Activated CD8-positive, alpha-beta T cell treated with anti-CD3 and anti-CD28 coated beads, Interleukin-2, amount 10 ng/mL, durations not matched to agents 7 days and 5 days (primary cell): ENCODE measurements at regions of chr2 and their contacts with region 1.

Region 1: GRCh38 chr2:231469583-231469950 is 5.3 kb upstream of the NCL start:
- DNase-seq: no peak
- ATAC-seq: no peak
- H3K4me3 Mint-ChIP-seq: no peak overlapping the region
- H3K27ac Mint-ChIP-seq: peak overlapping the region; percentile 78
- H3K4me1 Mint-ChIP-seq: peaks cover 23% of the 10 kb centered on the region
- H3K27me3 Mint-ChIP-seq: no peaks in the 10 kb centered on the region

Region 2: DNA sequence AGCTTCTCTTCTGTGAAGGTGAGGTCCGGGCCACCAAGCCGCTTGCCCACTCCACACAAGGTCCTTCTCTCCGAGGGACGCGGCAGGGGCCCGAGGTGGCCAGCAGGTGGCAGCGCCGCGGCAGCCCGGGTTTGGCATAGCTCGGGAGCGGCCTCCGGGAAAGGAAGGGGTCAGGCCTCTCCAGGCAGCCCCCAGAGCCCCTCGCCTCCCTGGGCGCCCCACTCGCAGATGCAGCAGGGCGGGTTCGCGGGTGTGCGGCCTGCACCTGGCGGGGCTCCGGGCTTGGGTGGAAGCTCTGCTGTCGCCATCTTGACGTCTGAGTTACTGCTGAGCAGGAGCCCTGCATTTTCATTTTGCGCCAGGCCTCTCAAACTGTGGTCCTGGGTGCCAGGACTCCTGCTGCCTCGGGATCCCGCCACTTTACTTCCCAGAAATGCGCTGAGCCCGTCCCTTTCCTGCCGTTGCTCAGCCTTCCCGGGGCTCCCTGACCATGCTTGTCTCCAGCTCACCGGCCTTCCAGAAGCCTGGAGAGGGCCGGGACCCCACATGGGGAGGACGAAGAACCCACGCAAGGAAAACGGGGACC is 13.3 kb after region 1 on chr2:
- CTCF ChIA-PET with region 1: interaction called, 107 read pairs
- POLR2A ChIA-PET with region 1: interaction called, 54 read pairs
- DNase-seq: peak; percentile 77
- ATAC-seq: peak; percentile 90
- H3K4me3 Mint-ChIP-seq: peak overlapping the region; percentile 75
- H3K27ac Mint-ChIP-seq: peak overlapping the region; percentile 88
- H3K4me1 Mint-ChIP-seq: peaks cover 20% of the 10 kb centered on the region
- H3K27me3 Mint-ChIP-seq: peaks cover 5% of the 10 kb centered on the region

Region 3: DNA sequence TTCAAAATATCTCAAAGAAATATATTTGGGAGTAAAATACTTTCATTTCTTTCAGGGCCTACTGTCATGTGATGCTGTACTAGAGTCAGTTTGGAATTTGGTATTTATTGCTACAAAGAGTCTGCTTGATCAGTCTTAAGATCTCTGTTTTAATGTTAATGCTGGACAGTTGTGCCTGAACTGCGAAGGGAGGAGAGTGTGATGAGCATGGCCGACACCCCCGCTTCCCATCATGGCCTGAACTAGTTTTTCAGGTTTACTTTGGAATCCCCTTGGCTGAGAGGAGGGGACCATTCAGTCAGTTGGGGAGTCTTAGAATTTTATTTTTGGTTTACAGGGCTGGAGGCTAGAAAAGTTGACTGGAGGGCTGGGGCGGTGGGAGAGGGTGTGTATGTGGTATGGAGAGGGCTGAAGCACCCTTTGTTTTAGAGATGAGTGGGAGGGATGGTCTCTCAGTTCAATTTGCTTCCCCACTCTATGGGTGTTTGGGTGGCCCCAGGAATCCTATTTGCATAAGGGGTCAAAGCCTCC is 102.2 kb after region 1 on chr2:
- CTCF ChIA-PET with region 1: no interaction called
- POLR2A ChIA-PET with region 1: no interaction called
- DNase-seq: no peak
- ATAC-seq: no peak
- H3K4me3 Mint-ChIP-seq: no peak overlapping the region
- H3K27ac Mint-ChIP-seq: no peak overlapping the region
- H3K4me1 Mint-ChIP-seq: peaks cover 16% of the 10 kb centered on the region
- H3K27me3 Mint-ChIP-seq: peaks cover 7% of the 10 kb centered on the region

Region 4: GRCh38 chr2:231696007-231696371 is 226.4 kb after region 1 on chr2:
- CTCF ChIA-PET with region 1: no interaction called
- POLR2A ChIA-PET with region 1: no interaction called
- DNase-seq: no peak
- ATAC-seq: no peak
- H3K4me3 Mint-ChIP-seq: no peak overlapping the region
- H3K27ac Mint-ChIP-seq: no peak overlapping the region
- H3K4me1 Mint-ChIP-seq: no peaks in the 10 kb centered on the region
- H3K27me3 Mint-ChIP-seq: no peaks in the 10 kb centered on the region